ENCODE measurements at regions of chr1 and their contacts with region 1.

Region 1: GRCh38 chr1:108559215-108560186 is at the start of gene EEIG2:
- DNase-seq: peak; percentile 90
- H3K4me3 ChIP-seq: peak within 1 kb of the TSS; percentile 51 to 75 (median 63)
- H3K27ac ChIP-seq: peak within 1 kb of the TSS; percentile 72 to 78 (median 76)
- H3K4me1 ChIP-seq: peaks cover 0 to 23% (median 11%) of the 10 kb centered on the region in 4 donors
- H3K27me3 ChIP-seq: no peaks in the 10 kb centered on the region
- CTCF ChIP-seq: peak in 2 of 4 experiments; percentile 29 to 85
- EP300 ChIP-seq: no peak
- POLR2A ChIP-seq: no peak
- total RNA-seq, gene EEIG2: 11.0 to 17.2 (median 13.4) TPM

Region 2: GRCh38 chr1:108512239-108512981 is 47.1 kb before region 1 on chr1:
- intact Hi-C with region 1: loop called (anchors 5 kb)
- DNase-seq: no peak
- H3K4me3 ChIP-seq: no peak overlapping the region
- H3K27ac ChIP-seq: no peak overlapping the region
- H3K4me1 ChIP-seq: no peaks in the 10 kb centered on the region
- H3K27me3 ChIP-seq: no peaks in the 10 kb centered on the region
- CTCF ChIP-seq: peak; percentile 63 to 78 (median 68)
- EP300 ChIP-seq: no peak
- POLR2A ChIP-seq: no peak

Region 3: GRCh38 chr1:108533351-108534083 is 26.0 kb before region 1 on chr1:
- intact Hi-C with region 1: no loop called
- DNase-seq: no peak
- H3K4me3 ChIP-seq: no peak overlapping the region
- H3K27ac ChIP-seq: no peak overlapping the region
- H3K4me1 ChIP-seq: no peaks in the 10 kb centered on the region
- H3K27me3 ChIP-seq: no peaks in the 10 kb centered on the region
- CTCF ChIP-seq: no peak
- EP300 ChIP-seq: no peak
- POLR2A ChIP-seq: no peak

Region 4: GRCh38 chr1:108691942-108692723 is 132.6 kb after region 1 on chr1 and contains the start of gene PRPF38B:
- intact Hi-C with region 1: loop called (anchors 2 kb)
- DNase-seq: peak; percentile 97
- H3K4me3 ChIP-seq: peak within 1 kb of the TSS; percentile 84 to 88 (median 86)
- H3K27ac ChIP-seq: peak within 1 kb of the TSS; percentile 96 to 98 (median 97)
- H3K4me1 ChIP-seq: peaks cover 0 to 35% (median 33%) of the 10 kb centered on the region in 4 donors
- H3K27me3 ChIP-seq: no peaks in the 10 kb centered on the region
- CTCF ChIP-seq: no peak
- EP300 ChIP-seq: no peak
- POLR2A ChIP-seq: peak; percentile 91 to 94
- total RNA-seq, gene PRPF38B: 24.7 to 28.0 (median 26.1) TPM

Measured in sigmoid colon (tissue), 7 donors.